ENCODE measurements at regions of chr16 and their contacts with region 1.

Region 1: GRCh38 chr16:55711959-55712876 is 56.4 kb downstream of the SLC6A2 start:
- DNase-seq: peak; percentile 65 to 88 (median 76)
- ATAC-seq: peak; percentile 73 to 75
- H3K4me3 ChIP-seq: no peak overlapping the region
- H3K27ac ChIP-seq: no peak overlapping the region
- H3K4me1 ChIP-seq: no peaks in the 10 kb centered on the region
- H3K27me3 ChIP-seq: no peaks in the 10 kb centered on the region

Region 2: GRCh38 chr16:55842369-55843104 is 130.3 kb after region 1 on chr16:
- intact Hi-C with region 1: loop called (anchors 1 to 2 kb)
- DNase-seq: no peak
- ATAC-seq: peak; percentile 63 to 71
- H3K4me3 ChIP-seq: no peak overlapping the region
- H3K27ac ChIP-seq: no peak overlapping the region
- H3K4me1 ChIP-seq: no peaks in the 10 kb centered on the region
- H3K27me3 ChIP-seq: no peaks in the 10 kb centered on the region

Measured in right cardiac atrium (tissue), 5 donors.